IMR-90 (cell line): ENCODE measurements at regions of chr2 and their contacts with region 1.

Region 1: DNA sequence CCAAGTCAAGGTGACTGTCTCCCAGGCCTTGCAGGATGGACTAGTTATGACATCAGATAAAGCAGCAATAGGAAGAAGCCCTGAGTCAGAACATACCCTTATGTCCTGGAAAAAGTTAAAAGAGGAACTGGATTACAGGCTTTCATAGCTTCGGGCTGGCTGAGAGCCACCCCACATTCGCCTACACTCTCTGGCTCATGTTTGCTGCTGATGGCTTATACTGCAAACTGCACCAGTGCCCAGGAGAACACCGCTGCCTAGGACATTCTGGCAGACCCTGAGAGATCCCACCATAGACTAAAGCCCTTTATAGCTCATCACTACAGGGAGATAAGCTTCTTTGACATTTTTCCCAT is 20.3 kb downstream of the SLC8A1 start:
- DNase-seq: peak; percentile 88
- ATAC-seq: peak; percentile 65
- H3K4me3 ChIP-seq: no peak overlapping the region
- H3K27ac ChIP-seq: no peak overlapping the region
- H3K4me1 ChIP-seq: peaks cover 13% of the 10 kb centered on the region
- H3K27me3 ChIP-seq: no peaks in the 10 kb centered on the region
- CTCF ChIP-seq: no peak
- POLR2A ChIP-seq: no peak
- RAD21 ChIP-seq: no peak

Region 2: DNA sequence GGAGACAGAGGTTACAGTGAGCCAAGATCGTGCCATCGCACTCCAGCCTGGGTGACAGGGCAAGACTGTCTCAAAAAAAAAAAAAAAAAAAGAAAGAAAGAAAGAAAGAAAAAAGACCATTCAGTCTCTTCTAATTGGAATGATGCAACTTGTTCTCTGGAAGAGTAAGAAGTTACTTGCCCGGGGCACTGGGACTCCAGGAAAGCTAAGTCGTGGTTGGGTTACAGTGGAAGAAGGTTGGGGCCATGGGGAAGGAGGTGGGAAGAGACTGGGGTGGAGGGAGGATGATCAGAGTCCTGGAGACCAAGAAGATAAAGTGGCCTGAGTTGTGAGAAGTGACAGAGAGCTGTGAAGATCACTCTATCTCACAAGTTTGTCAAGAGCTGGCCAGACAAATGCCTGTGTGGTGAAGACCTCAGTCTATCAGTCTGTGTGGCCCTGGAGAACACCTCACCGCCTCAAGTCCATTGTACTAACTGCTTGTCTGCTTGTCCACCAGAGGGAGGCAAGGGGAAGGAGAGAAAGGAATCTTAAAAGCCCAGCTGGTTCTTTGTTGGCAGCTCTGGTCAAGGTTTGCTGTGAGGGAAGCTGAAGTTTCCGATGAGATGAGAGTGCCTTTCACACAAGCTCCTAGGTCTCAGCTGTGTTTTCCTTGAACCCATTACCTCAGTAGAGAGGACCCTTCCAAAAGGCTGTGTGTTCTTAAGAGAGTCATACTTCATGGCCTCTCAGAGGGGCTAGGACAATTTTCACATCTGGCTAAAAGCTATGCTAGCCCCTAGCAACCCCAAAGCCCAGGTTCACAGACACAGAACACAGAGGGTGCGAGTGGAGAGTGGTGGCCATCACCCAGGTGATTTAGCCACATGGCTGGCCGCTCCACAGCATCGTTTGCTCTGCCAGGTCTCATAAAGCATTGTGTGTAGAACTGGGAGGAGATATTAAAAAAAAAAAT is 837.9 kb before region 1 on chr2:
- CTCF ChIA-PET with region 1: no interaction called
- POLR2A ChIA-PET with region 1: no interaction called
- dilution Hi-C with region 1: no loop called
- in situ Hi-C with region 1: no loop called
- intact Hi-C with region 1: loop called (anchors 5 kb)
- DNase-seq: peak; percentile 88
- ATAC-seq: peak; percentile 98
- H3K4me3 ChIP-seq: no peak overlapping the region
- H3K27ac ChIP-seq: no peak overlapping the region
- H3K4me1 ChIP-seq: peaks cover 5% of the 10 kb centered on the region; the same call in 1 of the 2 replicates
- H3K27me3 ChIP-seq: no peaks in the 10 kb centered on the region
- CTCF ChIP-seq: peak; percentile 79
- POLR2A ChIP-seq: no peak
- RAD21 ChIP-seq: peak; percentile 80

Region 3: GRCh38 chr2:39938035-39938835 is 493.3 kb before region 1 on chr2:
- CTCF ChIA-PET with region 1: interaction called, 10 read pairs
- POLR2A ChIA-PET with region 1: no interaction called
- dilution Hi-C with region 1: no loop called
- in situ Hi-C with region 1: no loop called
- intact Hi-C with region 1: no loop called
- DNase-seq: peak; percentile 97
- ATAC-seq: peak; percentile 95
- H3K4me3 ChIP-seq: no peak overlapping the region
- H3K27ac ChIP-seq: peak overlapping the region; percentile 97
- H3K4me1 ChIP-seq: peaks cover 10% of the 10 kb centered on the region
- H3K27me3 ChIP-seq: no peaks in the 10 kb centered on the region
- CTCF ChIP-seq: no peak
- POLR2A ChIP-seq: no peak
- RAD21 ChIP-seq: 0 out of 2 replicates have a peak, but pooled peaks have one; percentile 10

Region 4: GRCh38 chr2:40371525-40372282 is 59.9 kb before region 1 on chr2:
- CTCF ChIA-PET with region 1: no interaction called
- POLR2A ChIA-PET with region 1: no interaction called
- dilution Hi-C with region 1: no loop called
- in situ Hi-C with region 1: no loop called
- intact Hi-C with region 1: loop called (anchors 5 kb)
- DNase-seq: peak; percentile 90
- ATAC-seq: peak; percentile 85
- H3K4me3 ChIP-seq: no peak overlapping the region
- H3K27ac ChIP-seq: peak overlapping the region; percentile 70
- H3K4me1 ChIP-seq: peaks cover 19% of the 10 kb centered on the region
- H3K27me3 ChIP-seq: no peaks in the 10 kb centered on the region
- CTCF ChIP-seq: no peak
- POLR2A ChIP-seq: peak; percentile 5
- RAD21 ChIP-seq: no peak

Region 5: GRCh38 chr2:41393621-41394020 is 962.0 kb after region 1 on chr2:
- CTCF ChIA-PET with region 1: no interaction called
- POLR2A ChIA-PET with region 1: no interaction called
- dilution Hi-C with region 1: no loop called
- in situ Hi-C with region 1: no loop called
- intact Hi-C with region 1: no loop called
- DNase-seq: no peak
- ATAC-seq: no peak
- H3K4me3 ChIP-seq: no peak overlapping the region
- H3K27ac ChIP-seq: no peak overlapping the region
- H3K4me1 ChIP-seq: no peaks in the 10 kb centered on the region
- H3K27me3 ChIP-seq: no peaks in the 10 kb centered on the region
- CTCF ChIP-seq: no peak
- POLR2A ChIP-seq: no peak
- RAD21 ChIP-seq: no peak